ENCODE measurements at regions of chr12 and their contacts with region 1.

Region 1: GRCh38 chr12:127381048-127381668 is 885.8 kb upstream of the TMEM132C start:
- DNase-seq: peak; percentile 85
- ATAC-seq: peak; percentile 68
- H3K4me3 ChIP-seq: peak overlapping the region; percentile 65
- H3K27ac ChIP-seq: no peak overlapping the region
- H3K4me1 ChIP-seq: peaks cover 32% of the 10 kb centered on the region
- H3K27me3 ChIP-seq: no peaks in the 10 kb centered on the region
- CTCF ChIP-seq: peak; percentile 98

Region 2: DNA sequence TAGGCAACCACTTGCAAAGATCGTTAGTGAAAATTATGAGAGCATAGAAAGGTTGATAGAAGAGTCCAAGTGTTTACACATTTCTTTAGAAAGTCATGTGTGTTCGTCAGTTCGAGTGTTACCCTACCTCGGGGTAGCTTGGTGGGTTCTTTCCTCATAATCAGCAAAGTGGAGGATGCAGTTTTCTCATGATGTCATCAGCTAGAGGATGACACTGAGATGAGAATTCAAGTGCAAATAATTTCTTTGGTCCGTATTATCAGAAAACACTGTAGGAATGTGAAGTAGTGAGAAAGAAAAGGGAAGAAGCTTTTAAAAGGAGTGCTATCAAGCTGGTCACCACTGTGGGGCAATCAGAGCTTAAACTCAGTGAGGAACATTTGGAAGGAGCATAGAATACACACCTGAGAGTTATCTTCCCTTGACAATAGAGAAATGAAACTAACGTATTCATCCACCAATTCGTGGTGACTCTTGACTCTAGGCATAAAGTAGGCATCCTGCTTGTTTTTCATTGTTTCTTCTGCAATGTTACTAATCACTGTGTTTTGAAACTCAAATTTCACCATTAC is 455.0 kb before region 1 on chr12:
- CTCF ChIA-PET with region 1: interaction called, 5 read pairs
- POLR2A ChIA-PET with region 1: no interaction called
- intact Hi-C with region 1: loop called (anchors 2 kb)
- DNase-seq: peak; percentile 57
- ATAC-seq: peak; percentile 87
- H3K4me3 ChIP-seq: peak overlapping the region; percentile 36
- H3K27ac ChIP-seq: no peak overlapping the region
- H3K4me1 ChIP-seq: 0 out of 2 replicates have a peak, but pooled peaks cover 4% of the 10 kb centered on the region
- H3K27me3 ChIP-seq: peaks cover 36% of the 10 kb centered on the region
- CTCF ChIP-seq: peak; percentile 62

Region 3: GRCh38 chr12:127052511-127053232 is 328.5 kb before region 1 on chr12:
- CTCF ChIA-PET with region 1: interaction called, 3 read pairs
- POLR2A ChIA-PET with region 1: no interaction called
- intact Hi-C with region 1: loop called (anchors 2 kb)
- DNase-seq: peak; percentile 99
- ATAC-seq: peak; percentile 82
- H3K4me3 ChIP-seq: peak overlapping the region; percentile 59
- H3K27ac ChIP-seq: peak overlapping the region; percentile 99
- H3K4me1 ChIP-seq: peaks cover 50% of the 10 kb centered on the region
- H3K27me3 ChIP-seq: no peaks in the 10 kb centered on the region
- CTCF ChIP-seq: no peak

Region 4: DNA sequence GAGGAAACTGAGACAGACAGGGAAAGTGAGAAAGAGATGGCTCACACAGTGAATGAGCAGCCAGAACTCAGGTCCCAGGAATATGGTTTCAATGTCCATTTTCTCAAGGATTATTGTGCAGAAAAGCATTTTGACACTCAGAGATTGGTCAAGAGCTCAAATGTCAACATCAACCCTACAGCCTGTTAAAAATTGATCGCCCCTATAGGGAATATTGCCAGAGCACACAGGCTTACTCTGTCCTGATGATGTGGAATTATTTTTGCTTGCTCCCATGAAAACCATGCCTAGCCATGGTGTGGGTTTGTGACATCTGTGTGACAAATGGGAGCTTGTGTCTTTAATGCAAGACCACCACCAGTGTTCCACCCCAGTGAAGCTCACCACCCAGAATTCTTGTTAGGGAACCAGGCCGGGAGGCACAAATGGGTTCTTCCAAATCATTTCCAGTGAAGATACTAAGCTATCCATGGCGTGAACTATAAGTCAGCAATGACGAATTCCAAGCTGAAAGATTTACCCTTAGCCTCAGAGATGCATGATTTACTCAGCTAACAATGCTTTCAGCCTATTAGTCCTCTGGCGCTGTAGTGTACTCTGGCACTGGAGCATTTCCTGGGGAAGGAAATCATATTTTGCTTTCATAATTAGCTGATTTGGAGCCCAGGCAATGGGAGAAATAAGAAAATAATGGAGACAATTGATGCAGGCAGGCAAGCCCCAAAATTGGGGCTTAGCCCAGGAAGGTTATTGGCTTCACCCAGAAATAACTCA is 302.4 kb before region 1 on chr12:
- CTCF ChIA-PET with region 1: no interaction called
- POLR2A ChIA-PET with region 1: no interaction called
- intact Hi-C with region 1: no loop called
- DNase-seq: peak; percentile 65
- ATAC-seq: peak; percentile 58
- H3K4me3 ChIP-seq: no peak overlapping the region
- H3K27ac ChIP-seq: peak overlapping the region; percentile 53
- H3K4me1 ChIP-seq: peaks cover 46% of the 10 kb centered on the region
- H3K27me3 ChIP-seq: no peaks in the 10 kb centered on the region
- CTCF ChIP-seq: no peak

Region 5: DNA sequence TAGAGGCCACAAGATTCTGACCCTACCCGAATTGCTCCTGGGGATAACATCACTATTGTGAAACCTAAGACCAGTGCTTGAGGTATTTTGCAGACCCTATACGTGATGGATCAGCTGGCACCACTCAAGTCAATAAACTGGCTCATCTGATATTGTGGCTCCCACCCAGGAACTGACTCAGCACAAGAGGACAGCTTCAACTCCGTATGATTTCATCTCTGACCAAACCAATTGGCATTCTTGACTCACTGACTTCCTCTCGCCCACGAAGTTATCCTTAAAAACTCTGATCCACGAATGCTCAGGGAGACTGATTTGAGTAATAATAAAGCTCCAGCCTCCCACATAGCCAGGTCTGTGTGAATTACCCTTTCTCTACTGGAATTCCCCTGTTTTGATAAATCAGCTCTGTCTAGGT is 150.3 kb before region 1 on chr12:
- CTCF ChIA-PET with region 1: no interaction called
- POLR2A ChIA-PET with region 1: no interaction called
- intact Hi-C with region 1: loop called (anchors 5 kb)
- DNase-seq: peak; percentile 99
- ATAC-seq: peak; percentile 86
- H3K4me3 ChIP-seq: peak overlapping the region; percentile 11; the same call in 1 of the 2 replicates
- H3K27ac ChIP-seq: peak overlapping the region; percentile 84
- H3K4me1 ChIP-seq: peaks cover 21% of the 10 kb centered on the region
- H3K27me3 ChIP-seq: no peaks in the 10 kb centered on the region
- CTCF ChIP-seq: no peak

Region 6: DNA sequence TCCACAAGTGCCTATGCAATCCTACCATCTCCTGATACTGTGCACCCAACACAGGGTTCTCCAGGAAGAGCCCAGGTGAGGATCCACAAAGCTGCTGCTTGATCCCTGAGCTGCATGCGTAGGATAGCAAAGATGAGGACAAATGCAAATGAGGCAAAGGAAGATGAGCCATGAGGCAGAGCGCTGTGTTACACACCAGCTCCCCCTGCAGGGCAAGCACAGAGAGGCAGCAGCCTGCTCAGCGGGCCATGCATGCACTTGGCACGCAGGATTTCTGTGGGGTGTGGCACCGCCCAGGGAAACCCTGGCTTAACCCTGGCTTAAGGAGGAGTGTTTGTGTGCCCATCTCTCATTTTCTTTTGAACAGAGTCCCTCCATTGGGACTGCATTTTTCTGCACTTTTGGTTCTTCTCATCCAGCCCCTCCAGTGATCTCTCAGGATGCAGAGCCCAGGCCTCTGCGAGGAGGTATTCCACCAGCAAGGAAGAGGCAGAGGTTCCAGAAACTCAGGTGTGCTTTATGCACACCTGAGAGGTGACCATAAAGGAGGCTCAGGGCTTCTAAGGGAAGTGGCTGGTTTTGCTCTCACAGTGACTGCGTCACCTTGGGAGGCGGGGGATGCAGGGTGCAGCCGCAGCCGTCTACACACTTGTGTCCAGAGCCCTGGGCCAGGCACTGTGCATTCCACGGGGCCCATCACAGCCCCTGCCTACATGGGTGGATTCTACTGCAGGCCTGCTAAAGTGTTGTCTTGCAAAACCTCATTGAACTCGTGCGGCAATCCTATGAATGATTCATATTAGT is 87.4 kb before region 1 on chr12:
- CTCF ChIA-PET with region 1: no interaction called
- POLR2A ChIA-PET with region 1: no interaction called
- intact Hi-C with region 1: loop called (anchors 5 kb)
- DNase-seq: peak; percentile 93
- ATAC-seq: peak; percentile 98
- H3K4me3 ChIP-seq: no peak overlapping the region
- H3K27ac ChIP-seq: no peak overlapping the region
- H3K4me1 ChIP-seq: peaks cover 9% of the 10 kb centered on the region
- H3K27me3 ChIP-seq: no peaks in the 10 kb centered on the region
- CTCF ChIP-seq: peak; percentile 99

Region 7: GRCh38 chr12:127401005-127401404 is 19.8 kb after region 1 on chr12:
- CTCF ChIA-PET with region 1: no interaction called
- POLR2A ChIA-PET with region 1: no interaction called
- intact Hi-C with region 1: no loop called
- DNase-seq: peak; percentile 74
- ATAC-seq: peak; percentile 74
- H3K4me3 ChIP-seq: no peak overlapping the region
- H3K27ac ChIP-seq: no peak overlapping the region
- H3K4me1 ChIP-seq: peaks cover 26% of the 10 kb centered on the region
- H3K27me3 ChIP-seq: no peaks in the 10 kb centered on the region
- CTCF ChIP-seq: no peak

Region 8: DNA sequence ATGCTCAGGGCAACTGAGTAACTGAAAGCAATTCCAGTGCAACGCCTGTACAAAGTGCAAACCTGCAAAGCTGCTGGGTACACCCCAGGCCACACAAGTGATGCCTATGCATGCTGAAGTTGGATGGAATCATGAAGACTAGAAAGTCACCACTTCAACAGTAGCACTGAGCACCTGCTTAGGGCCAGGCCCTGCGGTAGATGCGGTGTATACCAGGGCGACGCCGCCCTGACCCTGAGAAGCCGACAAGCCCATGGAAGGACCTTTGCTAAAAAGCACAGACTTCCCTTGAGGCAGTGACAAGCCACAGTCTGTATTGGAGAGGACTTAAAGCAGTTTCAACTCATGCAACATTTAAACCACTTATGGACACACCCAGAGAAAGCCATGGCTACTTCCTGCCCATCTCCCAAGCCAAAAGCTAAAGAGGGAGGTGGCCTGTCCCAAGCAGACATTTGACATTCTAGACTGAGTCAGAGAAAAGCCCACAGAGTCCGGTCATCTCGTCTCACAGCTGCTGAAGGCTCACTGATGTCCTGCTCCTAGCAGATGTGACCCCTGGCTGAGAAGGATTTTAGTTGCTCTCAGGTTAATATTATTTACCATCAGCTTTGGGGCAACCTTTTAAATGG is 41.9 kb after region 1 on chr12:
- CTCF ChIA-PET with region 1: no interaction called
- POLR2A ChIA-PET with region 1: no interaction called
- intact Hi-C with region 1: no loop called
- DNase-seq: no peak
- ATAC-seq: no peak
- H3K4me3 ChIP-seq: no peak overlapping the region
- H3K27ac ChIP-seq: no peak overlapping the region
- H3K4me1 ChIP-seq: no peaks in the 10 kb centered on the region
- H3K27me3 ChIP-seq: peaks cover 9% of the 10 kb centered on the region; the same call in 1 of the 2 replicates
- CTCF ChIP-seq: no peak

Region 9: DNA sequence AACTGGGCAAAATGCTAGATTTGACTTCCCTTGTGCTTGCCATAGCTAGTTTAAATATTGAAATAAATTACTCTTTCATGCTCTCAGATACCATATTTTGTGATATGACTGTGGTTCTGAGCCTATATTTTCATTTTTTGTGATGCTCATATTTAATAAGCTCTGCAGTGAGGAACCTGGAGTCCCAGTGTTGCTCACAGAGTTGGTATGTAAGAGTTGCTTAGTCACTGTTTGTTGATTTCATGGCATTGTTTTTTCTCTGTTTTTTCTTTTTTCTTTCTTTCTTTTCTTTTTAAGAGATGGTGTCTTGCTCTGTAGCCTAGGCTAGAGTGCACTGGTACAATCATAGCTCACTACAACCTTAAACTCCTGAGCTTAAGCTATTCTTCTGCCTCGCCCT is 135.3 kb after region 1 on chr12:
- CTCF ChIA-PET with region 1: no interaction called
- POLR2A ChIA-PET with region 1: no interaction called
- intact Hi-C with region 1: no loop called
- DNase-seq: peak; percentile 70
- ATAC-seq: peak; percentile 67
- H3K4me3 ChIP-seq: no peak overlapping the region
- H3K27ac ChIP-seq: peak overlapping the region; percentile 36; the same call in 1 of the 2 replicates
- H3K4me1 ChIP-seq: peaks cover 21% of the 10 kb centered on the region
- H3K27me3 ChIP-seq: no peaks in the 10 kb centered on the region
- CTCF ChIP-seq: no peak

Region 10: DNA sequence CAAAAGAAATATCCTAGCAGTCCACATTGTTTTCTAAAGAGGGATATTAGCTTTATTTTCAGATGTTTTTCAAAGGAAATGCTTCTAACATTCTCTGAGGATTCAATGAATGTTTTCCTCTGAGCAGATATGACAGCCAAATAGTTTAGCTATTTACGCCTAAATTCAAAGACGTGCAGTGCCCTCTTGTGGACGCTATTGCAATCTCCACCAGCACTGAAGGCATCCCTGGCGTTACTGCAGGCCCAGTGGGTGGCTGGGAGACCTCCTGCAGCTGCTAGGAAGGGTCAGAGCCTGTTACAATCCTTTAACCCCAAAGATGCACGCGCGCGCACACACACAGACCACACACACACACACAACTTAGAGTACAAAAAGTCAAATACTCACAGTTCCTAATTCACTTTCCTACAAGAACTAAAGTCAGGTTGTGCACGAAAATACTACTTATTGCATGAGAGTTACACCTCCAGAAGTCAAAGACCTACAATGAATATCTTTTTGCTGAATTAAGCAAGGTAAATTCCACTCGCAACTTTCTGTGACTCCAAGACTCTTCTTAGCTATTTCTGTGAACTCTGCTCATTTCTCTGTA is 296.5 kb after region 1 on chr12:
- CTCF ChIA-PET with region 1: interaction called, 4 read pairs
- POLR2A ChIA-PET with region 1: no interaction called
- intact Hi-C with region 1: loop called (anchors 1 kb)
- DNase-seq: peak; percentile 97
- ATAC-seq: peak; percentile 93
- H3K4me3 ChIP-seq: no peak overlapping the region
- H3K27ac ChIP-seq: no peak overlapping the region
- H3K4me1 ChIP-seq: peaks cover 6% of the 10 kb centered on the region; the same call in 1 of the 2 replicates
- H3K27me3 ChIP-seq: no peaks in the 10 kb centered on the region
- CTCF ChIP-seq: peak; percentile 96